ENCODE measurements at regions of chr3 and their contacts with region 1.

Region 1: DNA sequence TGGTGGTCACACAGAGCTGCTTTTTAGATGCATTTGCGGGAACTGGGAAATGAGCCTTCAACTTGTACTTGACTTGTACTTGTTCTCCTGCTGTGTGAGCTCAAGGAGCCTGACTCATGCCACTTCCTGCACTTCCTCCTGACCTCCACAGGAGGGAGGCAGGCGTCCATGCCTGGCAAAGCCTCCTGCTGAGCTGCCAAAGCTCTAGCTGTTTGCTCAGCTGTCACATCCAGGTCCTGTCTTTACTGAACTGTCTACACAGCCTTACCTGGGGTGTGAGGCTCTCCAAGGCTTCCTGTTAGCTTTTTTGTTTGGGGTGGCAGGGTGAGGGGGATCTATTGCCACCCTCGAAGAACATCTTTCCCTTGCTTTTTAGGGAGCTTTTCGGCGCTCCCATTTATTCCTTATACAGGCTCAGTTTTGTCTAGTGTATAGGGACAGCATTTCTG is 6.4 kb downstream of the THPO start:
- ATAC-seq: peak; percentile 39 to 98 (median 95)
- H3K4me3 ChIP-seq: no peak overlapping the region
- H3K27ac ChIP-seq: no peak overlapping the region
- H3K4me1 ChIP-seq: peaks cover 7% of the 10 kb centered on the region in 2 donors

Region 2: GRCh38 chr3:184469423-184469822 is 97.8 kb after region 1 on chr3:
- in situ Hi-C with region 1: no loop called
- ATAC-seq: peak in 3 of 8 experiments; percentile 11 to 79 (median 25)
- H3K4me3 ChIP-seq: no peak overlapping the region
- H3K27ac ChIP-seq: no peak overlapping the region
- H3K4me1 ChIP-seq: peaks cover 0 to 8% of the 10 kb centered on the region in 2 donors

Region 3: DNA sequence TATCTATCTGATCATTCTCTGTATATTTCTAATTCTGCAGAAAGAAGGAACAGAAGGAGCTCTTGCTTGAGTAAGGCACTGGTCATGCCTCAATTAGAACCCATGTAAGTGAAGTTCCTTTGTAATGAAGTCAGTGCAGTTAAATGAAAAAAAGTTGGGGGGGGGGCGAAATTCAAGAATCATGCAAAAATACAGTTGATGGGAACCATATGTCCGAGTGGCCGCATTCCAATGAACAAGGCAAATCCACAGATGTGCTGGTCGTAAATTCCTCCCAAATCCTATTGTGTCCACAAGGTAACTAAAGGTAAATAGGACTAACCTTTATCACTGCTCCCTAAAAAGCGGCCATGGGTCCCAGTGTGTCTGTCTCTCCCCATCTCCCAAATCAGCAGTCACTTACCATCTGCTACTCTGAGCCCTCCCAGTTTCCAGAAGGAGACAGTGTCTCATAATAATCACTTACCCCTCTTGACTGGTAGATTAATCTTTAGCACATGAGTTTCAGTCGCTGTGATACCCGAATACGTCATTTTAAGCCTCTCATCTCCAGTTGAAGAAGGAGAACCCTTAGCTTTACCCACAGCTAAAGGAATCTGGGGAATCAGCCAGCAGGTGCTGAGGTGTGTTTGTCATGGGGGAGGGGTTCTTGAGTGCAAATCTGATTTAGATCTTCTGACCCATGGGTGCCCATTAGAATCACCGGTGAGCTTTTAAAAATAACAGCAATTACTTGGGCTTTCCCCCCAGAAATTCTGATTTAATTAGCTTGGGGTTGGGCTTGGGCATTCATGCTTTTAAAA is 133.7 kb after region 1 on chr3:
- in situ Hi-C with region 1: no loop called
- ATAC-seq: peak in 3 of 8 experiments; percentile 66 to 82 (median 72)
- H3K4me3 ChIP-seq: no peak overlapping the region
- H3K27ac ChIP-seq: no peak overlapping the region
- H3K4me1 ChIP-seq: peaks cover 0 to 6% of the 10 kb centered on the region in 2 donors

Region 4: GRCh38 chr3:184531626-184532280 is 160.2 kb after region 1 on chr3:
- in situ Hi-C with region 1: loop called in 4 of 9 experiments (anchors 10 to 25 kb)
- ATAC-seq: no peak
- H3K4me3 ChIP-seq: no peak overlapping the region
- H3K27ac ChIP-seq: no peak overlapping the region
- H3K4me1 ChIP-seq: no peaks in the 10 kb centered on the region